ENCODE measurements at regions of chr1 and their contacts with region 1.

Region 1: DNA sequence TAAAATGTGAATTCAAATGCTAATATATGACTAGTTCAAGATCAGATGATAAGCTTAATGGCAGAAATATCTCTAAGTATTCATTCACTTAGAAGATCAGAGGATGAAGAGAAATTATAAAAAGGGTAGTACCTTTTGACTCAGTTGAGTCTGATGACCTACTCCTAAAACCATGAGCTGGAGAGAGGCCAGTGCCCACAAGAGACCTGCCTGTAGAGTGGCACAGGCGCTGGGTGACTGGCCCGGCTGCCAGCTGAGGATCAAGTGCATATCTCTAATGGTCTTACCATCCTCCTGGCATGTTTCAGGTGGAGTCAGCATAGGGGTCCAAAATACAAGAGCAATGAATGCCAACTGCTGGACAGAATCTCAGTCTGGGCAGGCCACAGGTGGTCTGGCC is 14.1 kb downstream of the DDAH1 start:
- DNase-seq: no peak
- ATAC-seq: peak in 1 of 8 donors; percentile 43
- H3K4me3 ChIP-seq: no peak overlapping the region
- H3K27ac ChIP-seq: no peak overlapping the region
- H3K4me1 ChIP-seq: peaks cover 5 to 41% (median 24%) of the 10 kb centered on the region in 9 donors
- H3K27me3 ChIP-seq: no peaks in the 10 kb centered on the region
- CTCF ChIP-seq: no peak

Region 2: GRCh38 chr1:85240174-85240601 is 210.6 kb before region 1 on chr1:
- intact Hi-C with region 1: no loop called
- DNase-seq: peak in 1 of 2 donors; percentile 17
- ATAC-seq: peak in 4 of 8 donors; percentile 42 to 73 (median 50)
- H3K4me3 ChIP-seq: no peak overlapping the region
- H3K27ac ChIP-seq: no peak overlapping the region
- H3K4me1 ChIP-seq: peaks cover 0 to 20% (median 9%) of the 10 kb centered on the region in 9 donors
- H3K27me3 ChIP-seq: no peaks in the 10 kb centered on the region
- CTCF ChIP-seq: peak in 5 of 9 donors; percentile 18 to 45 (median 41)

Region 3: GRCh38 chr1:85289207-85289847 is 161.5 kb before region 1 on chr1:
- intact Hi-C with region 1: no loop called
- DNase-seq: no peak
- ATAC-seq: no peak
- H3K4me3 ChIP-seq: no peak overlapping the region
- H3K27ac ChIP-seq: peak overlapping the region in 1 of 10 donors; percentile 53
- H3K4me1 ChIP-seq: peaks cover 0 to 6% (median 0%) of the 10 kb centered on the region in 9 donors
- H3K27me3 ChIP-seq: no peaks in the 10 kb centered on the region
- CTCF ChIP-seq: no peak

Region 4: GRCh38 chr1:85360730-85361493 is 89.9 kb before region 1 on chr1:
- intact Hi-C with region 1: loop called in 1 of 10 experiments (anchors 5 kb)
- DNase-seq: peak in 1 of 2 donors; percentile 39
- ATAC-seq: peak in 7 of 8 donors; percentile 51 to 90 (median 83)
- H3K4me3 ChIP-seq: no peak overlapping the region
- H3K27ac ChIP-seq: peak overlapping the region in 6 of 10 donors; percentile 17 to 60 (median 43)
- H3K4me1 ChIP-seq: peaks cover 0 to 27% (median 10%) of the 10 kb centered on the region in 9 donors
- H3K27me3 ChIP-seq: no peaks in the 10 kb centered on the region
- CTCF ChIP-seq: no peak